ENCODE measurements at regions of chr22 and their contacts with region 1.

Region 1: GRCh38 chr22:21867528-21868266 is at the start of gene MAPK1:
- DNase-seq: peak; percentile 91 to 98 (median 95)
- H3K4me3 ChIP-seq: peak within 1 kb of the TSS; percentile 54 to 98 (median 89)
- H3K27ac ChIP-seq: peak within 1 kb of the TSS; percentile 16 to 96 (median 88)
- H3K27me3 ChIP-seq: no peaks in the 10 kb centered on the region
- CTCF ChIP-seq: peak in 53 of 56 donors; percentile 30 to 76 (median 56)
- total RNA-seq, gene MAPK1: 207 to 492 (median 330) TPM

Region 2: DNA sequence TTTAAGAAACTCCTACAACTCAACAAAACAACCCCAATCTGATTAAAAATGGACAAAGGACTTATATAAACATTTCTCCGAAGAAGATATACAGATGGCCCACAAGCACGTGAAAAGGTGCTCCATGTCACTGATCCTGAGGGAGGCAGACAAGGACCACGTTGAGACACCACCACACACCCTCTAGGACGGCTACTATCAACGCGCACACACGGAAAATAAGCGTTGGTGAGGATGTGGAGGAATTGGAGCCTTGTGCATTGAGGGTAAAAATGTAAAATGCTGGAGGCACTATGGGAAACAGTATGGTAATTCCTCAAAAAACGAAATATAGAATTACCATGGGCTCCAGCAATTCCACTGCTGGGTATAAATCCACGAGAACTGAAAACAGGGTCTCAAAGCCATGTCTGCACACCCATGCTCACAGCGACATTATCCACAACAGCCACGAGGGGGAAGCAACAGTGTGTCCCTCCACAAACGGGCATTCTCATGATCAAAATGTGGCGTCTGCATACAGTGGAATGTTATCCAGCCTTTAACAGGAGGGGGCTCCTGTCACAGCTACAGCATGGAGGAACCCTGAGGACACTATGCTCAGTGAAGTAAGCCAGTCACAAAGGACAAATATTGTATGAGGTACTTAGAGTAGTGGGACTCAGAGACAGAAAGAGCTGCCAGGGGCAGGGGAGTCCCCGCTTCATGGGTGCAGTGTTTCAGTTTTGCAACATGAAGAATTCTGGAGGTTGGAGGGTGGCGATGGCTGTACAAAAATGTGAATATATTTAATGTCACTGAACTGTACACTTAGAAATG is 154.6 kb before region 1 on chr22:
- intact Hi-C with region 1: loop called in 1 of 2 experiments (anchors 1 kb)
- DNase-seq: peak; percentile 57 to 90 (median 79)
- H3K4me3 ChIP-seq: peak overlapping the region in 44 of 59 donors; percentile 2 to 51 (median 30)
- H3K27ac ChIP-seq: peak overlapping the region in 41 of 59 donors; percentile 7 to 70 (median 47)
- H3K27me3 ChIP-seq: no peaks in the 10 kb centered on the region
- CTCF ChIP-seq: peak; percentile 61 to 96 (median 86)

Region 3: DNA sequence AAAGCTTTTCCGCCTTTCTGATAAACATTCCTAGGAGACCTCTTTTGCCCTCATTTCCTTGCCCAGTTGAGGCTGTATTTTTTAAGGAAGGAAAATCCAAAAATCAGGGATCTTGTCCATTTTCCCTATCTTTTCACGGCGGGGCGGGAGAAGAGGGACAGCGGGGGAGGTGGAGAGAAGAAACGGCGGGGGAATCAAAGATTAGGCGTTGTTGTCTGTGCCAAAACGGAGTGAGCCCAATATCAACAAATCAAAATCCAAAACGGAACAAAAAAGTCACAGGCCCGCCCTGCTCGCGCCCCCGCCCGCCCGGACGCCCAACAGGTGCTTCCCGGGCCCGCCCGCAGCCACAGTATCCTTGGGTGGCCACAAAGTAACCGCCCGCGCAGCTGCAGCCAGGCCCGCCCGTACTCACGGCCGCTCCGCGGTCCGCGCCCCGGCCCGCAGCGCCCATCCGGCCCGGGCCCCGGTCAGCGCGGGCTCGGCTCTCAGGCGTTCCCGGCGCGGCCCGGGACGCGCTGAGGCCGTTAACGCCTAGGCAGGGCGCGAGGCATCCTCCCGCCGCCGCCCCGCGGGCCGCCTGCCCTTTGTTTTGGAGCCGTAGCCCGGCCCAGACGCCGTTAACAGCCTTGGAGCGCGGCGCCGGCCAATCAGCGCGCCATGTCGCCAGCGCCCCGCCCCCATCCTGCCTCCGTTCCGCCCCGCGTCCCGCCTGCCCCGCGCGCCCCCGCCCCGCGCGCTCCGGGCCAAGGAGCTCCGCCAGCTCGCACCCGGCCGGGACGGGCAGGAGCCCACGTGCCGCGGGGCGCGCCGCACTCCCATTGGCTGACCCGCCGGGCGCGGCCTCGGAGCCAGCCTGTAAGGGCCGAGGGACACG is 132.3 kb before region 1 on chr22 and contains the start of gene YPEL1:
- intact Hi-C with region 1: loop called (anchors 2 kb)
- DNase-seq: peak; percentile 92 to 99 (median 96)
- H3K4me3 ChIP-seq: peak within 1 kb of the TSS; percentile 56 to 92 (median 77)
- H3K27ac ChIP-seq: peak within 1 kb of the TSS in 57 of 59 donors; percentile 18 to 91 (median 79)
- H3K27me3 ChIP-seq: no peaks in the 10 kb centered on the region
- CTCF ChIP-seq: peak in 12 of 56 donors; percentile 3 to 50 (median 20)
- total RNA-seq, gene YPEL1: 16.4 to 47.2 (median 29.4) TPM

Region 4: GRCh38 chr22:21791635-21792625 is 75.8 kb before region 1 on chr22:
- intact Hi-C with region 1: loop called (anchors 5 to 10 kb)
- DNase-seq: no peak
- H3K4me3 ChIP-seq: no peak overlapping the region
- H3K27ac ChIP-seq: peak overlapping the region in 13 of 59 donors; percentile 0 to 44 (median 10)
- H3K27me3 ChIP-seq: no peaks in the 10 kb centered on the region
- CTCF ChIP-seq: no peak

Region 5: DNA sequence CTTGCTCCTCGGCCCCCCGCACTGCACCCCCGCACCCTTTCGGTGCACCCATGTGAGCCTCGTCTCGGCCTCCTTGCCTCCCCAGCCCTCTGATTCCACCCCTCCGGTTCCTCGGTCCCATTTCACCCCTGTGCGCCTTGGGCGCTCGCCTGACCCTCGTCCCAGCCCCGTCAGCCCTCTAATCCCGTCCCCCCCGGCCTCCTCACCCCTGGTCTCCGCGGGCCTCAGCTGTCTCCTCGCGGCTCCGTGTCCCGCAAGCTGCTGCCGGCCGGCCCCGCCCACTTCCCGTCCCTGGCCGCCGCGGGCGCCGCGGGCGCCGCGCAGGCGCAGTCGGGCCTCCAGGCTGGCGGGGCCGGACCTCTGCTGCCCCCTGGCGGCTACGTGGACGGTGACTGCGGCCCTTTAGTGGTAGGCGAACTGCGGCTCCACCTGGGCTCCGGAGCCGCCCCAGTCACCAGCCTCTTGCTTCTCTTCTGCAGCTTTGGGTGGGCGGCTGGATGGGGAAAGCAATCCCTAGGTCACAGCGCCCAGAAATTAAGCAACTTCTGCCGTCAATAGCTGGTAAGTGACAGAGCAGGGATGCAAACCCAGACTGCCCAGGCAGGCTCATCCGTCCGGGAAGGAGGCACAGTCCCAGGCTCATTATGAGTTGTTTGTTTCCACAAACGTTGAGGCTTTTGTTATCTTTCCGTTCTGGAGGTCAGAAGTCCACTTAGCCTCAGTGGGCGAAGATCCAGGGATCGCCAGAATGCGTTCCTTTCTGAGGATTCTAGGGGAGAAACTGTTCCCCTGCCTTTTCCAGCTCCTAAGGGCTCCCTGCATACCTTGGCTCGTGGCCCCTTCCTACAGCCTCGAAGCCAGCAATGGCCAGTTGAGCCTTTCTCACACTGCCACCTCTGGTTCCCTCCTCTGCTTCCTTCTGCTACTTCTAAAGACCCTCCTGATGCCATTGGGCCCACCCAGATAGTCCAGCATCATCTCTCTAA is 85.2 kb after region 1 on chr22 and contains the start of gene PPM1F:
- intact Hi-C with region 1: loop called in 1 of 2 experiments (anchors 5 kb)
- DNase-seq: peak; percentile 64 to 91 (median 78)
- H3K4me3 ChIP-seq: peak within 1 kb of the TSS; percentile 44 to 80 (median 68)
- H3K27ac ChIP-seq: peak within 1 kb of the TSS in 25 of 59 donors; percentile 14 to 88 (median 46)
- H3K27me3 ChIP-seq: no peaks in the 10 kb centered on the region
- CTCF ChIP-seq: peak; percentile 64 to 99 (median 88)
- total RNA-seq, gene PPM1F: 22.1 to 52.4 (median 37.5) TPM